Activated naive CD4-positive, alpha-beta T cell treated with anti-CD3 and anti-CD28 coated beads, Interleukin-2, amount 10 ng/mL, durations not matched to agents 7 days and 5 days (primary cell): ENCODE measurements at regions of chr20 and their contacts with region 1.

Region 1: DNA sequence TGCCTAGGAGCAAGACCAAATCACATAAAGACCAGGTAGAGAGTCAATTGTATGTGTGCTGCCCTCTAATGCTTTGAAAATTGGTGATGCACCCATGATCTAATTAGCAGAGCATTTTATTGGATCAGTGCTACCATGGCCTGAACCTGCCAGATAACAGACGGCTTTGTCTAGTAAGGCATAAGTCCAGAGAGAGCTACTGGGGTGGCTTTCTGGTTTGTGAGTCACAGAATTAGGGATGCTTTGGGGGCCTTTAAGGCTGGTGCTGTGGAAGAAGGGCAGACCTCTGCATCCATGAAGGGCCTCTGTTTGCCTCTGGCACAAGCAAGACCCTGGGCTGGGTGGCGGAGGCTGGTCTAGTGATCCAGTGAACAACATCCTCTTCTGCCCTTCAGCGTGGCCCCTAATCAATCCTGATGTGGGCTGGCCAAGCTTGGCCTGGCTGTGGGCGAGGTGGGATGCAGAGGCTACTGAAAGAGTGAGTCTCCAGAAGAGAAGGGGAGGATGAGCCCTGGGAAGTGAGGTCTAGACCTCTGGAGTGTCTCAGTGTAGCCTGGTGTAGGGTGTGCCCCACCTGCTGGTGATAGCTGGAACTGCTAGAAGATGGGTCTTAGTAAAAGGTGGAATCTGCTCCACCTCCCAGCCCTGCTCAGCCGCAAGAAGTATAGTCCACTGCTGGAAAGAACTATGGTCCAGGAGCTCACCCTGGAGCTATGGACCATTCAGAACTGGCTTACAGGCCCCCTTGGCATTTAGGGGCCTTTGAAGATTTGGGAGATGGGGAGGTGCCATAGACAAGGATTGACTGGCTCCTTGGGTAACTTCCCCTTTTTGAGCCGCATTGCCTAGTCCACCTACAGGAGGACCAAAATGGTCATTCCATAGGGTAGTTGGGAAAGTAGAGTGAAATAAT is 36.7 kb upstream of the AAR2 start:
- DNase-seq: peak; percentile 86
- H3K4me3 Mint-ChIP-seq: no peak overlapping the region
- H3K27ac Mint-ChIP-seq: no peak overlapping the region
- H3K4me1 Mint-ChIP-seq: no peaks in the 10 kb centered on the region
- H3K27me3 Mint-ChIP-seq: peaks cover 42% of the 10 kb centered on the region

Region 2: DNA sequence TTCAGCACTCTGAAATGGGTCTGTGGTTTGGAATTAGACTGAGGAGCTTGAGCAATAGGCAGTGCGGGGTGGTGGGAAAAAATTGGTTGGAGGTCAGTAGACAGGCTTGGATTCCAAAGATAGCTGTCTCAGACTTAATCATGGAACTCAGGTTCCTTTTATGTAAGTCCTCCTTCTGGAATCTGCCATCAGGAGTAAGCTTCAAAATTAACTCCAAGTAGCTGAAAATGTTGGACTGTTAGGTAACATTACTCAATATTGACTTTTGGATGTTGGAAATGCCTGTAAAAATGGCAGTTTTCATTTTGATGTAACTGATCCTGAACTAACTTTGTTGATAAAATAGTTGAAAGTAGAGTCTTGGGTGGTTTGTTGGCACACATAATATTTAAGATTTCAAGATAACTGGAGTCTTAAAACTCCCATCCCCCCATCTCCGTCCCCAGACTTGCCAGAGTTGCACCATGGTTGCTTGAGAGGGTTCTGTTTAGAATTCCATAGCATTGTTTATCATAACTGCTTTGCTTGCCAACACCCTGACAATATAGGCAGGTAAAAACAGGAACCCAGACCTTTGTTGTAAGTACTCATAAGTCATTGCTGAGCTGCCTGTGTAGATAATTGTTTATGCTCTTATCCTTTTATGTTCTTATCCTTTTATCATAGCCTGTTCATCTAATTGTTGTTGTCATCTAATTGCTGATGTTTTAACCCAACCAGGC is 344.7 kb before region 1 on chr20:
- CTCF ChIA-PET with region 1: no interaction called
- DNase-seq: no peak
- H3K4me3 Mint-ChIP-seq: no peak overlapping the region
- H3K27ac Mint-ChIP-seq: no peak overlapping the region
- H3K4me1 Mint-ChIP-seq: peaks cover 2% of the 10 kb centered on the region
- H3K27me3 Mint-ChIP-seq: no peaks in the 10 kb centered on the region

Region 3: GRCh38 chr20:35994994-35995453 is 204.6 kb before region 1 on chr20:
- CTCF ChIA-PET with region 1: interaction called, 17 read pairs
- DNase-seq: peak; percentile 88
- H3K4me3 Mint-ChIP-seq: no peak overlapping the region
- H3K27ac Mint-ChIP-seq: no peak overlapping the region
- H3K4me1 Mint-ChIP-seq: no peaks in the 10 kb centered on the region
- H3K27me3 Mint-ChIP-seq: peaks cover 16% of the 10 kb centered on the region

Region 4: GRCh38 chr20:36154700-36155628 is 44.6 kb before region 1 on chr20 and contains the start of gene EPB41L1:
- CTCF ChIA-PET with region 1: interaction called, 26 read pairs
- DNase-seq: peak; percentile 31
- H3K4me3 Mint-ChIP-seq: peak within 1 kb of the TSS; percentile 13
- H3K27ac Mint-ChIP-seq: no peak within 1 kb of the TSS
- H3K4me1 Mint-ChIP-seq: peaks cover 2% of the 10 kb centered on the region
- H3K27me3 Mint-ChIP-seq: peaks cover 67% of the 10 kb centered on the region

Region 5: DNA sequence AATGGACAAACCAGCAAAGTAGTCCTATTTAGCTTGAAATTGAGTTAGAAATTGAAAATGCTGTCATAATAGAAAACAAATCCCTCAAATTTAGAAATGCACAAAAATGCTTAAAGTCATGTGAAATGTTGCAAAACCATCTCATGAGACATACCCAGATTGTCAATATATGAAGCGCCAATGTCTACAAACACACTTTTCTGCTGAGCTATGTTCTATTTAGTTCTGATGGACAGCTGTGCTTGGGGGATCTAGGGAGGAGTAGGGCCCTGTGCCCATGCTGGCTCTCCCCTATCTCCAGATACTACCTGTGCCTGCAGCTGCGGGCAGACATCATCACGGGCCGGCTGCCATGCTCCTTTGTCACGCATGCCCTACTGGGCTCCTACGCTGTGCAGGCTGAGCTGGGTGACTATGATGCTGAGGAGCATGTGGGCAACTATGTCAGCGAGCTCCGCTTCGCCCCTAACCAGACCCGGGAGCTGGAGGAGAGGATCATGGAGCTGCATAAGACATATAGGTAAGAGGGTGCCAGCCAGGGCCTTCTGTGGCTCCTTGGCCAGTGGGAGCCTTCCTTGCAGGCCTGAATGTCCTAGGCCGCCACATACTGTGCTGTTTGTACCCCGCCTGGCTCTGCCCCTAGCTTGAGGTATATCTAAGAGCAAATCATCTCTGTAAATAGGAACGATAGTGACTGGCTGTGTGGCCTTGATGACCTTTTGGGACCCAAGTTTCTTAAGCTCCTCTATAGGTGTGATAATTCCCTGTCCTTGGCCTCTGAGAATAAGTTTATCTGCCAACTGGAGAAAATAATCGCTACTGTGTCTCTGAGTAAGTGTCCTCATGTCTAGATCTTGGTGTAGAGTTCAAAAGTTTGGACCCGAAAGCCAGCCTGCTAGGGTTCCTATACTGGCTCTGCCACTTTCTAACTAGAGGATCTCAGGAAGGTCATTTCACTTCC is 14.5 kb before region 1 on chr20:
- CTCF ChIA-PET with region 1: interaction called, 16 read pairs
- DNase-seq: no peak
- H3K4me3 Mint-ChIP-seq: no peak overlapping the region
- H3K27ac Mint-ChIP-seq: no peak overlapping the region
- H3K4me1 Mint-ChIP-seq: no peaks in the 10 kb centered on the region
- H3K27me3 Mint-ChIP-seq: peaks cover 3% of the 10 kb centered on the region

Region 6: DNA sequence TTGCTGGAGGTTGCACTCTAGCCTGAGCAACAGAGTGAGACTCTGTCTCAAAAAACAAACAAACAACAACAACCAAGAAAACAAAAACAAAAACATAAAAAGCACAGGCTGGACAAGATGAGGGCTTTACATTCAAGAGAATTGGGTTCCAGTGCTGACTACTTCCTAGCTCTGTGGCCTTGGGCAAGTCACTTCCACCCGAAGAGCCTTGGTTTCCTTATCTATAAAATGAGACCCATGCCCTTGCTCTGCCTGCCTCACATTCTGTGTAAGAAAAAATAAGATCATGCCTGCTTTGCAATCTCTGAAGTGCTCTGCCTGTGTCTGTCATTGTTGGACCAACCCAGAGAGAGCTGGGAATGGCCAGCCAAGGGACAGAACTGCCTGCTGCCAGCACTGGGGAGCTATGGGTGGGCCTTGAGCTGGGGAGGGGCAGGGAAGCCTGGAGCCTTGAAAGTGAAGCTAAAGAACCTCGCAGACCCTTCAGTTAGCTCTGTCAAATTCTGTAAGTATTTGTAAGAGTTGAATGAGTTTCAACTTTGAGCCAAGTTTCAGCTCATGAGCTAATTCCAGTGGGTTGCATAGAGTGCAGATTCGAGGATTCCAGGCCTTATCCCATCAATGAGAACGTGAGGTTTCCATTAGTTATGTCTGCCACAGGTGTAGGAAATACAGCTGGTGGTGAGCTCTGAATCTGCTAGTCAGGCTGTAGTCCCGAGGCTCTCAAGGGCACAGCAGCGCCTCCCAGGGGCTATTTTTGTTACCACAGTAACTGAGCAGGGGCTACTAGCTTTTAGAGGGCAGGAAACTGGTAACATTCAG is 199.8 kb after region 1 on chr20:
- CTCF ChIA-PET with region 1: interaction called, 16 read pairs
- DNase-seq: peak; percentile 68
- H3K4me3 Mint-ChIP-seq: no peak overlapping the region
- H3K27ac Mint-ChIP-seq: no peak overlapping the region
- H3K4me1 Mint-ChIP-seq: no peaks in the 10 kb centered on the region
- H3K27me3 Mint-ChIP-seq: peaks cover 43% of the 10 kb centered on the region

Region 7: DNA sequence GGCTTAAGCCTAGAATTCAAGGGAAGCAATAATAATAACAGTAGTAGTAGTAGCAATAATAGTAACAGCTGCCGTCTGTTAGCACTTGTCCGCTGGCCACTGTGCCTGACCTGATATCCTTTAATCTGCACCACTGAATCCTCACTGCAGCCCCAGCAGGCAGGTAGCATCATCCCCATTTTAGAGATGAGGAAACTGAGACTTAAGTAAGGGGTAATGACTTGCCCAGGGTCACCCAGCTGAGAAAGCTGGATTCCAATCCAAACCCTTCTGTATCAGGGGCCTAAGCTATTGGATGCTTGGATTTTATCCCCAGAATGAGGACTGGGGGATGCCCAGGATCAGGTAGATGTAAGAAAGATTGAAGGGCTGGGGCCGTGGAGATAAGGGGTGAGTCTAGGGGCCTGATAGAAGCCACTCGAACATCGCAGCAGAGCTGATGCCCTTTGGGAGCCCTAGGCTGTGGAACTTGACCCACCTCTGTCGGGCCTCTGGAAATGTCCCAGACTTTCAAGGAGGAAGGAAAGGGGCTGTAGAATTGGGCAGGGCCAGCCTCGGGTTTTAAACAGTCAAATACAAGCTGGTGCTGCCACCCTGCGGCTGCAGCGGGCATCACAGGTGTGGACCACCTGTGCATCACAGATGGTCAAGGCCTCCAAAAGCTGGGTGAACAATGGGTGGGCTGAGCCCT is 239.6 kb after region 1 on chr20:
- CTCF ChIA-PET with region 1: interaction called, 20 read pairs
- DNase-seq: peak; percentile 75
- H3K4me3 Mint-ChIP-seq: no peak overlapping the region
- H3K27ac Mint-ChIP-seq: no peak overlapping the region
- H3K4me1 Mint-ChIP-seq: peaks cover 3% of the 10 kb centered on the region
- H3K27me3 Mint-ChIP-seq: peaks cover 55% of the 10 kb centered on the region